ENCODE measurements at regions of chr13 and their contacts with region 1.

Region 1: GRCh38 chr13:44969551-44970484 is 19.5 kb downstream of the NUFIP1 start:
- DNase-seq: peak in 1 of 2 donors; percentile 52
- ATAC-seq: peak in 1 of 3 donors; percentile 34
- H3K4me3 ChIP-seq: no peak overlapping the region
- H3K4me3 Mint-ChIP-seq: no peak overlapping the region
- H3K27ac ChIP-seq: no peak overlapping the region
- H3K27ac Mint-ChIP-seq: no peak overlapping the region
- H3K4me1 ChIP-seq: no peaks in the 10 kb centered on the region
- H3K4me1 Mint-ChIP-seq: no peaks in the 10 kb centered on the region
- H3K27me3 ChIP-seq: no peaks in the 10 kb centered on the region
- H3K27me3 Mint-ChIP-seq: no peaks in the 10 kb centered on the region
- CTCF ChIP-seq: peak; percentile 77

Region 2: GRCh38 chr13:44322928-44323327 is 646.9 kb before region 1 on chr13:
- intact Hi-C with region 1: no loop called
- DNase-seq: no peak
- ATAC-seq: no peak
- H3K4me3 ChIP-seq: no peak overlapping the region
- H3K4me3 Mint-ChIP-seq: no peak overlapping the region
- H3K27ac ChIP-seq: no peak overlapping the region
- H3K27ac Mint-ChIP-seq: no peak overlapping the region
- H3K4me1 ChIP-seq: no peaks in the 10 kb centered on the region
- H3K4me1 Mint-ChIP-seq: no peaks in the 10 kb centered on the region
- H3K27me3 ChIP-seq: no peaks in the 10 kb centered on the region
- H3K27me3 Mint-ChIP-seq: peaks cover 5 to 19% of the 10 kb centered on the region in 2 donors
- CTCF ChIP-seq: no peak

Region 3: GRCh38 chr13:44815623-44816022 is 154.2 kb before region 1 on chr13:
- intact Hi-C with region 1: no loop called
- DNase-seq: no peak
- ATAC-seq: no peak
- H3K4me3 ChIP-seq: no peak overlapping the region
- H3K4me3 Mint-ChIP-seq: no peak overlapping the region
- H3K27ac ChIP-seq: no peak overlapping the region
- H3K27ac Mint-ChIP-seq: no peak overlapping the region
- H3K4me1 ChIP-seq: no peaks in the 10 kb centered on the region
- H3K4me1 Mint-ChIP-seq: no peaks in the 10 kb centered on the region
- H3K27me3 ChIP-seq: no peaks in the 10 kb centered on the region
- H3K27me3 Mint-ChIP-seq: peaks cover 12% of the 10 kb centered on the region in 2 donors
- CTCF ChIP-seq: no peak

Region 4: GRCh38 chr13:45310341-45311125 is 340.7 kb after region 1 on chr13:
- intact Hi-C with region 1: loop called (anchors 1 kb)
- DNase-seq: no peak
- ATAC-seq: no peak
- H3K4me3 ChIP-seq: peak overlapping the region; percentile 46
- H3K4me3 Mint-ChIP-seq: peak overlapping the region; percentile 87
- H3K27ac ChIP-seq: no peak overlapping the region
- H3K27ac Mint-ChIP-seq: peak overlapping the region in 1 of 2 donors; percentile 78
- H3K4me1 ChIP-seq: peaks cover 22% of the 10 kb centered on the region
- H3K4me1 Mint-ChIP-seq: peaks cover 18 to 19% of the 10 kb centered on the region in 2 donors
- H3K27me3 ChIP-seq: no peaks in the 10 kb centered on the region
- H3K27me3 Mint-ChIP-seq: peaks cover 0 to 3% of the 10 kb centered on the region in 2 donors
- CTCF ChIP-seq: no peak